ENCODE measurements at regions of chr2 and their contacts with region 1.

Region 1: DNA sequence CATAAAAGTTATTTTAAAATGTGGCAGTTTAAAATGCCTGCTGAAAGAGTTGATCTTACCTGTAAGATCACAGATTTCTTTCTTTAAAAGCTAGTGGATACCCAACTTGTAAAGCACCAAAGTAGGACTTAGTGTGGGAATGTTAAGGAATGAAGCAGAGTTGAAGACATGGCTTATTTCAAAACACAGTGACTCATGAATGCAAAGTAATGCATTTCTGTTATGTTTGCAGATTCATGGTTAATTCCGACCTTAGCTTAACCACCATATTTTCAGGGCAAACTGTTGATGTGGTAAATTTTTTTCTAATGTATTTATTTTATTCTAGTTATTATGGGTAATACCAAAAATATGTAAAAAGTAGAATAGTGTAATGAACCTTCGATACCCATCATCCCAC is 206.8 kb upstream of the FOSL2 start:
- DNase-seq: no peak
- H3K4me3 Mint-ChIP-seq: no peak overlapping the region
- H3K27ac Mint-ChIP-seq: no peak overlapping the region
- H3K4me1 Mint-ChIP-seq: no peaks in the 10 kb centered on the region
- H3K27me3 Mint-ChIP-seq: no peaks in the 10 kb centered on the region

Region 2: DNA sequence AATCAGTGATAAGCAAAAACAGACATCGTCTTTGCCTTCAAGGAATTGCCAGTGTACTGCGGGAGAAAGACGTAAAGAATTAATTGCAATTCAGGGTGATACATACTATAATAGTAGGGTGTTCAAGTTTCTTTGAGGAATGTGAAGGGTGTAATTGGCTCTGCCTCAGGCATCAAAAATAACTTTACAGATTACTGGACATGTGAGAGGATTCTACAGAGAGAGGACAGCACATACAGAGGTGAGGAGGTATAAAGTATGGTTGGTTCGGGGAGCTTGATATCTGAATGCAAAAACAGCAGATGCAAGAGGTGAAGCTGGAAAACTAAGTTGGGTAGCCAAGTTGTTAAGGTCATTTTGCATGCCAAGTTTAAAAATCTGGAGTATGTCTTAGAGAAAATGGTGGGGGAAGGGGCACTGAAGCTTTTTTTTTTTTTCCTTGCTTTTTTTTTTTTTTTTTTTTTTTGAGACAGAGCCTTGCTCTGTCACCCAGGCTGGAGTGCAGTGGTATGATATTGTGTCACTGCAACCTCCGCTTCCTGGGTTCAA is 20.7 kb before region 1 on chr2:
- intact Hi-C with region 1: loop called (anchors 1 kb)
- DNase-seq: no peak
- H3K4me3 Mint-ChIP-seq: no peak overlapping the region
- H3K27ac Mint-ChIP-seq: no peak overlapping the region
- H3K4me1 Mint-ChIP-seq: no peaks in the 10 kb centered on the region
- H3K27me3 Mint-ChIP-seq: no peaks in the 10 kb centered on the region